ENCODE measurements at regions of chr13 and their contacts with region 1.

Region 1: GRCh38 chr13:43878892-43879754 is at the start of gene CCDC122:
- DNase-seq: peak; percentile 89
- H3K4me3 ChIP-seq: peak within 1 kb of the TSS; percentile 83 to 88 (median 88)
- H3K27ac ChIP-seq: peak within 1 kb of the TSS; percentile 87
- H3K4me1 ChIP-seq: peaks cover 22% of the 10 kb centered on the region
- H3K27me3 ChIP-seq: no peaks in the 10 kb centered on the region
- CTCF ChIP-seq: no peak
- total RNA-seq, gene CCDC122: 6.7 to 12.1 TPM

Region 2: DNA sequence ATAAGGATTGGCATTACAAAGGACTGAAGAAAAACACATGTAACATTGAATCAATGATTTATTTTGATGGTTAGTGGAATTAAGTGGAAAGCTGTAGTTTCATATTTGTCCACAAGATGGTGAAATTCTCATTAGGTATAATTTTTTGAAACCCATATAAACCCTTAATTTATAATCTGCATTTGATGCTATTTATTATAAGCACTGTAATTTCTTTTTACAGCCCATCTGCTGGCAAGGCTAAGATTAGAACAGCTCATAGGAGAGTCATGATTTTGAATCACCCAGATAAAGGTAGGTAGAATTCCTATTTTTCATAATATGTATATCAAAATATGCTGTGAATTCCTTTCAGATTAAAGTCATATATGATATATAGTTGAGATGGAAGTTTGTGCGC is 793.6 kb before region 1 on chr13:
- CTCF ChIA-PET with region 1: no interaction called
- dilution Hi-C with region 1: no loop called
- in situ Hi-C with region 1: no loop called
- intact Hi-C with region 1: loop called (anchors 2 kb)
- DNase-seq: peak; percentile 12
- H3K4me3 ChIP-seq: no peak overlapping the region
- H3K27ac ChIP-seq: no peak overlapping the region
- H3K4me1 ChIP-seq: no peaks in the 10 kb centered on the region
- H3K27me3 ChIP-seq: no peaks in the 10 kb centered on the region
- CTCF ChIP-seq: peak; percentile 44 to 45

Region 3: GRCh38 chr13:43303033-43303729 is 575.9 kb before region 1 on chr13:
- CTCF ChIA-PET with region 1: interaction called, 3 read pairs
- dilution Hi-C with region 1: no loop called
- in situ Hi-C with region 1: no loop called
- intact Hi-C with region 1: loop called (anchors 1 kb)
- DNase-seq: peak; percentile 23
- H3K4me3 ChIP-seq: no peak overlapping the region
- H3K27ac ChIP-seq: no peak overlapping the region
- H3K4me1 ChIP-seq: peaks cover 17% of the 10 kb centered on the region
- H3K27me3 ChIP-seq: no peaks in the 10 kb centered on the region
- CTCF ChIP-seq: peak; percentile 16 to 69

Region 4: DNA sequence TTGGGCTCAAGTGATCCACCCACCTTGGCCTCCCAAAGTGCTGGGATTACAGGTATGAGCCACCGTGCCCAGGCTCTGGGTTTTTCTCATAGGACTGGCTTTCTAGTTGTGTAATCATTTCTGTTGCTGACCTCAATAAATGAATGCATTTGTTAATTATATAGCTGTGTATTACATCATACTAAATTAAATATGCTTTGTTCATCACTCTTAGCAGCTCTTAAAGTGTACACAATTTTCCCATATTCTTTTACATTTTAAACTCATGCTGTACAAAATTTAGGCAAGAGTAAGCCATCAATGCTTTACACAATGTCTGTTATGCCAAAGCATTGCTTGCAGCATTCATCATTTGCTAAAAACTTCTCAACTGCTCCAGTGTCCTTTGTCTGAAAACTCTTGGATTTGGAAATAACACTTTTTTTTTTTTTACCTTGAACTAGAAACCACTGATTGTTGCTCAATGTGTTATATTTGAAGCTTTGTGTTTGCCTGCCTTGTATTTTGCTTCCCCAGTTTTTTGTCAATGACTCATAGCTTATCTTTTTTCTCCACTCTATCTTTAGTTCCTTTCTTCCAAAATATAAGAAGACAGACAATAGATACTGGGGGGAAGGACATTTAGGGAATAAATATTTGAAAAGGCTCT is 31.0 kb before region 1 on chr13:
- CTCF ChIA-PET with region 1: no interaction called
- dilution Hi-C with region 1: no loop called
- in situ Hi-C with region 1: no loop called
- intact Hi-C with region 1: no loop called
- DNase-seq: peak; percentile 65
- H3K4me3 ChIP-seq: no peak overlapping the region
- H3K27ac ChIP-seq: peak overlapping the region; percentile 27
- H3K4me1 ChIP-seq: peaks cover 7% of the 10 kb centered on the region
- H3K27me3 ChIP-seq: no peaks in the 10 kb centered on the region
- CTCF ChIP-seq: no peak

Measured in mammary epithelial cell (primary cell).